ENCODE measurements at regions of chr1 and their contacts with region 1.

Region 1: GRCh38 chr1:185317034-185317885 is at the start of gene IVNS1ABP:
- DNase-seq: peak; percentile 95
- H3K4me3 Mint-ChIP-seq: peak within 1 kb of the TSS; percentile 92
- H3K27ac Mint-ChIP-seq: peak within 1 kb of the TSS; percentile 94
- H3K4me1 Mint-ChIP-seq: peaks cover 40% of the 10 kb centered on the region
- H3K27me3 Mint-ChIP-seq: no peaks in the 10 kb centered on the region
- total RNA-seq, gene IVNS1ABP: 97.3 to 100 TPM

Region 2: GRCh38 chr1:183635606-183636333 is 1681.5 kb before region 1 on chr1 and contains the start of gene ARPC5:
- CTCF ChIA-PET with region 1: no interaction called
- intact Hi-C with region 1: loop called (anchors 2 kb)
- DNase-seq: peak; percentile 97
- H3K4me3 Mint-ChIP-seq: peak within 1 kb of the TSS; percentile 98
- H3K27ac Mint-ChIP-seq: peak within 1 kb of the TSS; percentile 99
- H3K4me1 Mint-ChIP-seq: peaks cover 27% of the 10 kb centered on the region
- H3K27me3 Mint-ChIP-seq: no peaks in the 10 kb centered on the region
- total RNA-seq, gene ARPC5: 162 to 164 TPM

Region 3: GRCh38 chr1:184973272-184974055 is 343.8 kb before region 1 on chr1:
- CTCF ChIA-PET with region 1: no interaction called
- intact Hi-C with region 1: loop called (anchors 1 kb)
- DNase-seq: peak; percentile 84
- H3K4me3 Mint-ChIP-seq: peak overlapping the region; percentile 79
- H3K27ac Mint-ChIP-seq: peak overlapping the region; percentile 93
- H3K4me1 Mint-ChIP-seq: peaks cover 40% of the 10 kb centered on the region
- H3K27me3 Mint-ChIP-seq: peaks cover 25% of the 10 kb centered on the region

Region 4: DNA sequence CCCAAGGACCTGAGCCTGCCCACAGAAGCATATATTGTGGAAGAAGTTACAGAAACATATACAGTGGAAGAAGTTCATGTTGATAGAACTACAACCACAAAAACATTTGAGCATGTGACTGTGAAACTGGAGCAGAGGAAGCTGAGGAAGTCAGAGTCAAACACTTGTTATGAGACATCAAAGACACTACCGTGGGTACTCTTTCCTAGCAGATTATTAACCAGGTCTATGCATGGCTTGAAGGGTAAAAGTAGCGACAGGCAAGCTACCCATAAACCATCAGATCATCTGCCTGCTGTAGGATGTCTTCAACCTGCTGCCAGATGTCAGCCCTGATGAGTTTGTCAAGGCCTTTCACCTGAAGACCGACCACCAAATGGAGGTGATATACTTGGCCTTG is 36.0 kb before region 1 on chr1:
- CTCF ChIA-PET with region 1: no interaction called
- intact Hi-C with region 1: loop called (anchors 1 kb)
- DNase-seq: peak; percentile 24
- H3K4me3 Mint-ChIP-seq: peak overlapping the region; percentile 8
- H3K27ac Mint-ChIP-seq: peak overlapping the region; percentile 77
- H3K4me1 Mint-ChIP-seq: peaks cover 59% of the 10 kb centered on the region
- H3K27me3 Mint-ChIP-seq: no peaks in the 10 kb centered on the region

Region 5: GRCh38 chr1:185566995-185567394 is 249.7 kb after region 1 on chr1:
- CTCF ChIA-PET with region 1: no interaction called
- intact Hi-C with region 1: loop called (anchors 1 kb)
- DNase-seq: peak; percentile 57
- H3K4me3 Mint-ChIP-seq: no peak overlapping the region
- H3K27ac Mint-ChIP-seq: peak overlapping the region; percentile 70
- H3K4me1 Mint-ChIP-seq: peaks cover 68% of the 10 kb centered on the region
- H3K27me3 Mint-ChIP-seq: no peaks in the 10 kb centered on the region

Region 6: GRCh38 chr1:185681034-185681633 is 363.9 kb after region 1 on chr1:
- CTCF ChIA-PET with region 1: interaction called, 8 read pairs
- intact Hi-C with region 1: loop called (anchors 1 kb)
- DNase-seq: peak; percentile 42
- H3K4me3 Mint-ChIP-seq: no peak overlapping the region
- H3K27ac Mint-ChIP-seq: no peak overlapping the region
- H3K4me1 Mint-ChIP-seq: peaks cover 15% of the 10 kb centered on the region
- H3K27me3 Mint-ChIP-seq: no peaks in the 10 kb centered on the region

Region 7: DNA sequence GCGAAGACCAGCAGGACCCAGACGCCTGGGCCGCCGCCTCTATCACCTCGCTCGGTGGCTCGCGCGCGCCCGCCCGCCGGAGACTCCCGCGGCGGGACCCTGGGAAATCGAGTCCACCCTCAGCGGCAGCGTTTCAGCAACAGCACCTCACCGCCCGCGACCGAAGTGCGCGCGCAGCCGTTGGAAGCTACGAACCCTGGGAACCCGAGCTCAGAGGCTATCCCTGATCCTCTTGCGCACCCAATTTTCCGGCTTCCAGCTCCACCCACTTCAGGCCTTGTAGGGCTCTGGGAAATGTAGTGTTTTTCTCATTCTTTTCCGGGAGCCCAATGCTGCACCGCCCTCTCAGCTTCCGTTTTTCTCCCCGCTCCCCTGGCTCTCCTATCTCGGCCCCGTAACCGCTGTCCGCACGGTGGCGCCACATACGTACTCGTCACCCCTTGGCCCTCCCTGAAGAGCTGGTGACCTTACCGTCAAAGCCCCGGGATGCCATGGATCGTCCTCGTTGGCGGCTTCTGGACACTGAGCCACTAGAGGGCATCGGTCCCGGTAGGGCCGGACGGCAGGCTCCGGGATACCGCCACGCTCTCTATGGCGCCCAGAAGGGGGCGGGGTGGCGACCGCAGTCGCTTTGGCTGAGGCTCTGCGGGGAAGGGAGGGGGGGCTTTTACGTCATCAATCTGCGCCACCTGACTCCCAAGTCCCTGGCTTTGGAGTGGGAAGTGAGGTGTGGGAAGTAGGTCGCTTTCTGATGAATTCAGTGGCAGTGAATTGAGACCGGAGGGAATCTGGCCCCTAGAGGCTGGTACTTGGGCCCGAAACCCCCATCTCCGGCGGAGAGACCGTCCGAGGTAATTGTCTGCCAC is 1058.1 kb after region 1 on chr1 and contains the starts of genes ODR4 and TPR:
- CTCF ChIA-PET with region 1: no interaction called
- intact Hi-C with region 1: loop called (anchors 1 kb)
- DNase-seq: peak; percentile 98
- H3K4me3 Mint-ChIP-seq: peak within 1 kb of the TSS; percentile 98
- H3K27ac Mint-ChIP-seq: peak within 1 kb of the TSS; percentile 95
- H3K4me1 Mint-ChIP-seq: peaks cover 38% of the 10 kb centered on the region
- H3K27me3 Mint-ChIP-seq: no peaks in the 10 kb centered on the region
- total RNA-seq, gene ODR4: 13.0 to 15.5 TPM
- total RNA-seq, gene TPR: 217 to 226 TPM